ENCODE measurements at regions of chr1 and their contacts with region 1.

Region 1: GRCh38 chr1:203026031-203026989 is at the start of gene PPFIA4:
- DNase-seq: peak; percentile 74
- total RNA-seq, gene PPFIA4: 8.7 and 15.3 TPM in 2 replicates

Region 2: DNA sequence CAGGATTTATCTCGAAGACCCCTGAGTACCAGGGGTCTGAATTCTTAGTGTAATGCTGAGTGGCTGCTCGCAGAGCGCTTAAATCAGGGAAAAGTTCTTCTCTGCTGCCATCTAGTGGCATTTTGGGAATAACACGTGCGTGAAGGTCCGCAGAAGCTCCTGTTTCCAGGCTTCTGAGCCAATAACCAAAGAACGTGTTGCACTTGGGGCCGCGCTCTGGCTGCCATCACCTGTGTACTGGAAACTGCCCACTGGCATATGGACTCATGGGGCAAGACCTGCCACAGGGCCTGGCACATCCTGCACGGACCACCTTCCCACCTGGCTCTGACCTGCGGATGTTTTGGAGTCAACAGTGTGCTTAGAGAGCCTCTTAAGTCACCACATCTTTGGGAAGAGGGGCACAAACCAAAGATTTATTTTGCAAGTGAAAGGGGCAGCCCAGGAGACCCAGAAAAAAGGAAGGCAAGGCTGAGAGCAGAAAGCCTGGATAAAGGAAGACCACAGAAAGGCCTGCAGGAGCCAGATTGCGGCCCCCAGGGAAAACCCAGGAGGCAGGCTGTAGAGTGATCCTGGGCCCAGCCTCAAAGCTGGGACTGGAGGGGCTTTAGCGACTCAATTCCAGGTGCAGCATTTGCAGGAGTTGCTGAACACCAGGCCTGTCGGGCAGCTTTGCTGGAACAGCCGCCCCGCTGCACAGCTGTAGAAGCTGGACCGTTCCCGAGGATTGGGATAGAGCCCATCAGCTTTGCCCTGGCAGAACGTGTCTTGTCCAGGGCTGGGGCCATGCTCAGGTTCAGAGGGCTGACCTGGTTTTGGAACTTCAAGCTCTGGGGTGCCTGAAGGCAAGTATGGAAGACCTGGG is 190.2 kb after region 1 on chr1:
- in situ Hi-C with region 1: loop called (anchors 25 kb)
- DNase-seq: peak; percentile 36